Endothelial cell of umbilical vein (primary cell): ENCODE measurements at regions of chr12 and their contacts with region 1.

Region 1: DNA sequence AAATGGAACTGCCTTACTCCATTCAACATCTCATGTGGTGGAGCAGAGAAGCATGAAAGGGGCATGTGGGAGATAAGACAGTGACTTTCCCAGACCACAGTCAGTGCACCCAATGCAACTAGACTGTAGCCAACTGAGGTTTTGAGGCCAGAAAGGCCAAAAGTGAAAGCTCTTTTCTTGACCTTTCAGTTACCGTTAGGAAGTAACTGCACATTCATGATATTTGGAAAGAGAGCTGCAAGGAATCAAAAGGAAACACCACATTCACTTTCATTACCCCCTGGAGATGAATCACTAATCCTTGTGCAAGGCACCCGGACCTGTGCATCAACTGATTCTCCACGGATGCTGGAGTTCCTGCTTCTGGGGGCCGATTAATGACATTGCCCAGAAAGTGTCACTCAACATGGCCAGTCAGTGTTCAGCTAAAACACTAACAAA is 72.9 kb upstream of the ELK3 start:
- DNase-seq: peak; percentile 32
- H3K4me3 ChIP-seq: no peak overlapping the region
- H3K27ac ChIP-seq: no peak overlapping the region
- H3K4me1 ChIP-seq: peaks cover 11% of the 10 kb centered on the region
- H3K27me3 ChIP-seq: no peaks in the 10 kb centered on the region
- CTCF ChIP-seq: no peak
- POLR2A ChIP-seq: no peak

Region 2: DNA sequence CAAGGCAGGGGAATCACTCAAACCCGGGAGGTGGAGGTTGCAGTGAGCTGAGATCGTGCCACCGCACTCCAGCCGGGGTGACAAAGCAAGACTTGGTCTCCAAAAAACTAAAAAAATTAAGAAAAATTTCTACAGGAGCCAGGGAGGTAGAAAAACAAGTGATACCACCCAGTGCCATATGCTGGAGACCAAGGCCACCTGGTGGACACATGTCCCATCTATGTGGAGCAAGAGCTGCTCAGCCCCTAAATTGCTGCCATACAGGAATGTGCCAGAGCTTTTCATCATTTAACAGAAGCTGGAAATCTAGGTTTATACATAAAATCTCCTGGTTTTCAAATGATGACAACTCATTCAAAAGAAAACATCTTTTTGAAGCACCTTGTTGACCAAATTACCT is 11.5 kb after region 1 on chr12:
- CTCF ChIA-PET with region 1: interaction called, 10 read pairs
- POLR2A ChIA-PET with region 1: no interaction called
- dilution Hi-C with region 1: no loop called
- intact Hi-C with region 1: no loop called
- DNase-seq: peak; percentile 48
- H3K4me3 ChIP-seq: no peak overlapping the region
- H3K27ac ChIP-seq: no peak overlapping the region
- H3K4me1 ChIP-seq: peaks cover 29% of the 10 kb centered on the region
- H3K27me3 ChIP-seq: no peaks in the 10 kb centered on the region
- CTCF ChIP-seq: peak; percentile 15 to 42
- POLR2A ChIP-seq: no peak

Region 3: GRCh38 chr12:96828169-96828789 is 707.0 kb after region 1 on chr12:
- CTCF ChIA-PET with region 1: no interaction called
- POLR2A ChIA-PET with region 1: no interaction called
- dilution Hi-C with region 1: no loop called
- intact Hi-C with region 1: no loop called
- DNase-seq: no peak
- H3K4me3 ChIP-seq: no peak overlapping the region
- H3K27ac ChIP-seq: no peak overlapping the region
- H3K4me1 ChIP-seq: no peaks in the 10 kb centered on the region
- H3K27me3 ChIP-seq: no peaks in the 10 kb centered on the region
- CTCF ChIP-seq: no peak
- POLR2A ChIP-seq: no peak